Endothelial cell of umbilical vein (primary cell): ENCODE measurements at regions of chr17 and their contacts with region 1.

Region 1: DNA sequence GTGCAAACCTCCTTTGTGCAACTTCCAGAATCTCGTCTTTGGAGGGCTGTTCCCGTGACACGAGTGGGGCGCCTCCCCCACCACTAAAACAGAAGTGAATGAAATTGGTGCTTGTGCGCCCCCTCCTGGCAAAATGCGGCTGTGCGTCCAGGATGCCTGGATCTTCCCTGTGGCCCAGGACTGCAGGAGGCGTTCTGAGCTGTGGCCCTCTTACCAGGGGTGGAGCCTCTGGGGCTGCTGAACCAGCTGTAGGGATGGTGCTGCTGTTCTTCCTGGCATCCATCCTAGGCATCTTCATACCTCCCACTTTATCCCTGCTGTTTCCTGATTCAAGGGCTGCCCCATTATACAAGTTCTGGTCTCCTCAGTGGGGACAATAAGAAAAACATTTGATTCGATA is 18.5 kb upstream of the NAGLU start:
- DNase-seq: peak; percentile 90
- H3K4me3 ChIP-seq: no peak overlapping the region
- H3K27ac ChIP-seq: peak overlapping the region; percentile 100
- H3K4me1 ChIP-seq: peaks cover 51% of the 10 kb centered on the region
- H3K27me3 ChIP-seq: no peaks in the 10 kb centered on the region
- CTCF ChIP-seq: peak; percentile 92 to 98
- POLR2A ChIP-seq: peak; percentile 54

Region 2: DNA sequence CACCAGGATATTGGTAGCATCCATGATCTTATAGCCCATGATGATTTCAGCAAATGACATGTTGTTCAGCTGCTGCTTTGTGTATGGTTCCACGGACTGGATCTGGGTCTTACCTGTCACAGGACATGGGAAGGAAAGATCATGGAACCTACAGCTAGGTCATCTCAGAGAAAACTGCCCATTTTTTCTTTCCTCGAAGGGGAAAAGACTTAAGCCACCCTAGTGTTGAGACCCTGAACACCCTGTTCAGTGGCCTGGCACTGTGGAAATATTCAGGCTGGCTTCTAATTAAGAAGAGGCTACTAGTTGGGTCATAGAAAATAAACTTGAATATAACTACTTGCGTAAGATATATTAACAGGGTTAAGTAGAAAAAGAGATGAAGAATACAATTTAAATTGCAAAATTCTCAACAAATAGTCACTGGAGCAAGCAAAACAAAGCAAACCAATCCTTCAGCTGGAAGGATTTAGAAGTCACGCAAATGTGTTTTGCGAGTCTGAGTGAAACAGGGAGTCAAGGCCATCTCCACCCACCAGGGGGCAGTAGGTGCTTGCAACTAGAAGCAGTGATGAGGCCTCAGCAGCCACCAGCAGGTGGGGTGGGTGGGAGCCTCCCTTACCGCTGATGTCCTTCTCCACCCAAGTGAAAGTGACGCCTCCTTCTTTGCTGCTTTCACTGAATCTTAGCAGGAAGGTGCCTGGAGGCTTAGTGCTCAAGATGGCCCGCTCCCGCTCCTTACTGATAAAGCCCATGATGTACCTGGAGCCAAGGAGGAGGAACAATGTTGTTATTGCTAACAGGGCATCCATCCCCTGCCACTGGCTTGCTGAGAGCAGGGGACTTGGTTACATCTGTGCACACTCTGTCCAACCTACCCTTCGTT is 194.9 kb before region 1 on chr17:
- CTCF ChIA-PET with region 1: interaction called, 190 read pairs
- POLR2A ChIA-PET with region 1: interaction called, 20 read pairs
- dilution Hi-C with region 1: loop called (anchors 25 kb)
- intact Hi-C with region 1: loop called (anchors 1 kb)
- DNase-seq: peak; percentile 92
- H3K4me3 ChIP-seq: no peak overlapping the region
- H3K27ac ChIP-seq: peak overlapping the region; percentile 97
- H3K4me1 ChIP-seq: peaks cover 35% of the 10 kb centered on the region
- H3K27me3 ChIP-seq: no peaks in the 10 kb centered on the region
- CTCF ChIP-seq: peak; percentile 97 to 99
- POLR2A ChIP-seq: no peak

Region 3: DNA sequence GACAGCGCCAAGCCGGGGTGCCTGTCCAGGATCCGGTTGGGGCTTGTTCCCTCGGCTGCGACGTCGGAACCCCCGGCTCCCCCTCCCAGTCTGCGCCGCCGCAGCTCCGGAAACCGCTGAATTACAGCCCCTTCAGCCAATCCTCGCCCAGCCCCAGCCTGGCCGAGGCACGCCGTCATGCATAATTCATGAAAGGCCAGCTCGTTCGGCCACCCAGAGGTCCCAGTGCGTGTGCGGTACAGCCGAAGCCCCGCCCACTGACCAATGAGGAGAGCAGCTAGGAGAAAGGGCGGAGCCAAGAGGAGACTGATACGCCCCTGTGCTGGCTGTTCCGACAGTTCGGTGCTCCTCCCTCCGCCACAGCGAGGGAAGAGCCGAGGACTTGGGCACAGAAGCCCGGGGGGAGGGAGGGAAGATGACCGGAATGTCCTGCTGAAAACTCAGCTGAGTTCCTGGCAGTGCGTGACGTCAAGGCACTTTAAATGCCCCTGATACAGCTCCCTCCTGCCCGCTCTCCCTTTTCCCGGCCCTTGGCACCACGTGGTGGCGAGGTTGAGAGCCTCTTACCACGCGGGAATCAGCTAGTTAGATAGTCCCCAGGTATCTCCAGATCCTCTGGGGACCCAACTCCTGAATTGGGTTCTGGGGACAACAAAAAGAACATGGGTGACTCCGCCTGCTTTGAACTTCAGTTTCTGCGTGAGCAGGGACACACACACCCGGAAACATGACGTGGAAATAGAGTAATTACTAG is 129.0 kb before region 1 on chr17 and contains the start of gene STAT3:
- CTCF ChIA-PET with region 1: interaction called, 16 read pairs
- POLR2A ChIA-PET with region 1: interaction called, 7 read pairs
- dilution Hi-C with region 1: no loop called
- intact Hi-C with region 1: loop called (anchors 1 kb)
- DNase-seq: peak; percentile 100
- H3K4me3 ChIP-seq: peak within 1 kb of the TSS; percentile 41 to 89 (median 55)
- H3K27ac ChIP-seq: peak within 1 kb of the TSS; percentile 98
- H3K4me1 ChIP-seq: peaks cover 21% of the 10 kb centered on the region
- H3K27me3 ChIP-seq: no peaks in the 10 kb centered on the region
- CTCF ChIP-seq: no peak
- POLR2A ChIP-seq: peak; percentile 84
- total RNA-seq, gene STAT3: 108 and 124 TPM in 2 replicates

Region 4: GRCh38 chr17:42422958-42423712 is 94.4 kb before region 1 on chr17 and contains the start of gene CAVIN1:
- CTCF ChIA-PET with region 1: interaction called, 35 read pairs
- POLR2A ChIA-PET with region 1: interaction called, 38 read pairs
- dilution Hi-C with region 1: no loop called
- intact Hi-C with region 1: loop called (anchors 1 kb)
- DNase-seq: peak; percentile 95
- H3K4me3 ChIP-seq: peak within 1 kb of the TSS; percentile 67 to 84 (median 79)
- H3K27ac ChIP-seq: peak within 1 kb of the TSS; percentile 80
- H3K4me1 ChIP-seq: peaks cover 24% of the 10 kb centered on the region
- H3K27me3 ChIP-seq: no peaks in the 10 kb centered on the region
- CTCF ChIP-seq: no peak
- POLR2A ChIP-seq: peak; percentile 99
- total RNA-seq, gene CAVIN1: 663 and 684 TPM in 2 replicates

Region 5: GRCh38 chr17:42484304-42484703 is 33.2 kb before region 1 on chr17:
- CTCF ChIA-PET with region 1: interaction called, 10 read pairs
- POLR2A ChIA-PET with region 1: no interaction called
- dilution Hi-C with region 1: no loop called
- intact Hi-C with region 1: no loop called
- DNase-seq: peak; percentile 41
- H3K4me3 ChIP-seq: no peak overlapping the region
- H3K27ac ChIP-seq: no peak overlapping the region
- H3K4me1 ChIP-seq: peaks cover 7% of the 10 kb centered on the region
- H3K27me3 ChIP-seq: no peaks in the 10 kb centered on the region
- CTCF ChIP-seq: no peak
- POLR2A ChIP-seq: no peak

Region 6: DNA sequence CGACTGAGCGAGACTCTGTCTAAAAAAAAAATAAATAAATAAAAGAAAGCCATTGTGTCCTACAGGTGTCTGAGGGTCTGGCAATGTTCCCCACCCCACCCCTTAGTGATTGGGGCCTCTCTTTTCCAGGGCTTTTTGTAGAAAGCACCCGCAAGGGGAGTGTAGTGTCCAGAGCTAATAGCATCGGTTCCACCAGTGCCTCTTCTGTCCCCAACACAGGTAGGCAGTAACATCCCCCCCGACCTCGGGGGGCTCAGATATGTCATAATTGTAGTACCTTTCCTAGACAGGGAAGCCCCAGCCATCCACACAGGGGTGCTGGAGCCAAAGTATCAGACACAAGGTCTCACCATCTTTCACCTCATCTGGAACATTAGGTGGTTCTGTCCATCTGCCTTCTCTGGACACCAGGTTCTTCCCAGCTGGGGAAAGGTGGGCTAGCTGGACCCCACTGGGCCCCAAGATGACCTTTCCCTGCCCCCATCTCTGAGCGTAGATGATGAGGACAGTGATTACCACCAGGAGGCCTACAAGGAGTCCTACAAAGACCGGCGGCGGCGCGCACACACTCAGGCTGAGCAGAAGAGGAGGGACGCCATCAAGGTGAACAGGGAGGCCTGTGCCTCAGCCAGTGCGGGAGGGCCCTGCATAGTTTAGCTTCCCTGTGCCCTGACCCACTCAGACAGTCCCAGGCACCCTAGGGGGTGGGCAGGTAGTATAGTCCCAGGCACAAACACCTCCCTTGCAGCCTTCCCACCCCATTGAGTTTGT is 51.0 kb after region 1 on chr17:
- CTCF ChIA-PET with region 1: no interaction called
- POLR2A ChIA-PET with region 1: no interaction called
- dilution Hi-C with region 1: no loop called
- intact Hi-C with region 1: no loop called
- DNase-seq: no peak
- H3K4me3 ChIP-seq: no peak overlapping the region
- H3K27ac ChIP-seq: no peak overlapping the region
- H3K4me1 ChIP-seq: peaks cover 17% of the 10 kb centered on the region
- H3K27me3 ChIP-seq: no peaks in the 10 kb centered on the region
- CTCF ChIP-seq: no peak
- POLR2A ChIP-seq: peak; percentile 32

Region 7: DNA sequence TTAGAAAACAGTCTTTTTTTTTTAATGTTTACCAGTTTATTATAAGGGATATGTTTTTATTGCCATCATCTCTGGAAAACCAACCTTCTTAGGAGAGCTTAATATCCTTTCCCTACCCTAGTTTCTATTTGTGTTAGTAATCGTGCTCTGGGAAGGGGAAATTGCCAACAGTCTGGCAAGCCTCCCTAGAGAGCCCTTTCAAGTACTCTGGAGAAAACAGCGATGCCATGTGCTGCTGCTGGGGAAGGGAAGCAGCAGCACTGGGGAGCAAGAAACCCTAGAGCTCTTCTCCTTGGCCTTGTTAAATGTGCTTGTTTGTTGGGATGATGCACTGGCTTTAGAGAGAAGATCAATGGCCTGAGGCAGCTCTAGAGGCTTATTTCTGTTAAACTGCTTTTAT is 81.4 kb after region 1 on chr17:
- CTCF ChIA-PET with region 1: no interaction called
- POLR2A ChIA-PET with region 1: no interaction called
- dilution Hi-C with region 1: no loop called
- intact Hi-C with region 1: no loop called
- DNase-seq: no peak
- H3K4me3 ChIP-seq: no peak overlapping the region
- H3K27ac ChIP-seq: no peak overlapping the region
- H3K4me1 ChIP-seq: no peaks in the 10 kb centered on the region
- H3K27me3 ChIP-seq: no peaks in the 10 kb centered on the region
- CTCF ChIP-seq: no peak
- POLR2A ChIP-seq: no peak